Calu3 (cell line): ENCODE measurements at regions of chr20 and their contacts with region 1.

Region 1: DNA sequence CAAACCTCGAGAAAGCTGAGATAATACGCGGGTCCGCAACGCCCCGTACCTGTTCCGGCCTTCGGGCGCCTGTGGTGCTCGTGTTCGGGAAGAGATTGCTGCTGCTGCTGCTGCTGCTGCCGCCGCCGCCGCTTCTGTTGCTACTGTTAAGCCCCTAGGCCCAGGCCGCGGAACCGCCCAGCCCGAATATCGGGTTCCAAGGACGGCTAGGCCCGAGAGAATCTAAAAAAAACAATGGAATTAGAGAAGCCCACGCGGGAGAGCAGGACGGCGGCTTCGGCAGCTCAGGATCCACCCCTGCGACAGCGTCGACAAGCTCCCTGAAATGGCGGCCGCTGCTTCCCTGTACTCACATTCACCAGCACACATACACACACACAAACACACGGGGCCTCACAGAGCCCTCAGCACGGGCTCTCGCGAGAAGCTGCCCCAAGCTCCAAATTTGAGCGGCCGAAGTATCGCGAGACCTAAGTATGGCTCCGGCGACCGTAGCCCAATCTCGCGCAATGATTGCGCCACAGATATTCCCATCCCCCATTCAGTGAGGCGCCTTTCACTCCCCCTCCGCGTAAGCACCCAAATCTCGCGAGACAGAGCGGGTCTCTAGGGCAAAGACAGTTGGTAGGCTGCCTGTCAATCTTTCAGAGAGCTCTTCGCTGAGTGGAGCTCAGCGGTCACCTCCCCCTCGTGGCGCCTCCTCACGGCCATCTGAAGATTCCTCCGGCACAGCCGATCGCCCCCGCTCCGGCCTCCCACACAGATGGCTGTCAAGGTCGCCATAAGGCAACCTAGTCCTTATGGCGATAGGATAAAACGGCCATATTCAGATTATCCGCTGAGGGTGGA is at the start of gene RBM39:
- DNase-seq: peak; percentile 100
- H3K4me3 Mint-ChIP-seq: peak within 1 kb of the TSS; percentile 80
- H3K27ac Mint-ChIP-seq: peak within 1 kb of the TSS; percentile 100
- H3K4me1 Mint-ChIP-seq: peaks cover 35% of the 10 kb centered on the region
- H3K27me3 Mint-ChIP-seq: no peaks in the 10 kb centered on the region
- CTCF ChIP-seq: peak; percentile 52
- total RNA-seq, gene RBM39: 422 and 479 TPM in 2 replicates

Region 2: DNA sequence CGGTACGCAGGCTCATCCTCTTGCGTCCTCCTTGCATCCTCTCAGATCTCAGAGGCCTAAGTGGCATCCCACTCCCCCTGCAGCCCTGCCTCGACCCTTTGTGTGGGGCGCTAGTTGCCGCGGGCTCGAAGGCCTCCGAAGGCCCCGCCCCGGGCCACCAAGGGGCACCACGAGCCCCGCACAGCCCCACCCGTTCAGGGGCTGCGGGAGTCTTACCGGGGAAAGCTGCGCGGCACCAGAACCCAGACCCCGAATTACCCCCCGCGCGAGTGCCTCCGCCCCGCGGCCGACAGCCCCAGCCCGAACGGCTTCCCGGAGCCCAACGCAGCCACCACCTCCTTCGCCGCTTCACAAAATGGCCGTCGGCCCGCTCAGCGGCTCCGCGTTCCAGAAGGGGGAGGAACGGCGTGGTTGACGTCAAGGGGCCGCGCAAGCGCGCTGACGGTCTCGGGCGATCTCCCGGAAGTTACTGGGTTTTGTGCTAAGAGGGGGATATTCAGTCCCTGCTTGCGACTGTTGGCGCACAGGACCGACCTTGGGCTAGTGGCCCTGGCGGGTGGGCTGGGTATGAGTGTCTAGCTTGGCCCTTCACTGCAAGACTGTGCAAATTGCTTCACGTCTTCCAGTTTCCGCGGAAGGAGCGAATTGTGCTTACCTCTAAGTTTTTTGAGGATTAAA is 77.4 kb before region 1 on chr20 and contains the starts of genes CPNE1 and RBM12:
- CTCF ChIA-PET with region 1: no interaction called
- intact Hi-C with region 1: loop called (anchors 2 kb)
- DNase-seq: peak; percentile 97
- H3K4me3 Mint-ChIP-seq: peak within 1 kb of the TSS; percentile 98
- H3K27ac Mint-ChIP-seq: peak within 1 kb of the TSS; percentile 99
- H3K4me1 Mint-ChIP-seq: peaks cover 43% of the 10 kb centered on the region
- H3K27me3 Mint-ChIP-seq: no peaks in the 10 kb centered on the region
- CTCF ChIP-seq: no peak
- total RNA-seq, gene CPNE1: 458 and 505 TPM in 2 replicates
- total RNA-seq, gene RBM12: 125 and 133 TPM in 2 replicates

Region 3: DNA sequence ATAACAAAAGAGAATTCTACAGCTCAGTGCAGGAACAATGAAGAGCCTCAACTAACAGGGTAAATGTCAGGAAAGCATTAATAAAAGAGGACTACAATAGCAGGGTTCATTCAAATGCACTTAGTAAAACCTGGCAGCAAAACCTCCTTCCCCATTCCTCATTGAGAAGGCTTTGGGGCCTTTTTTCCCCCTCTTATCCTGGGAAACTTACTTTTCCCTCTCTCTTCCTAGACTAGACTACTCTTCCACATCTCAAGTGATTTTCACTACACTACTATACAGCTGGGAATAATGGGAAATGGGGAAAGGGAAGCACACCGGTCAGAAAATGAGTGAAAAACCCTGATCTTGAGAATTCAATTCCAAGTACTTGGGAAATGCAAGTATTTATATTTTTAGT is 32.9 kb before region 1 on chr20:
- CTCF ChIA-PET with region 1: no interaction called
- intact Hi-C with region 1: loop called (anchors 2 kb)
- DNase-seq: no peak
- H3K4me3 Mint-ChIP-seq: no peak overlapping the region
- H3K27ac Mint-ChIP-seq: peak overlapping the region; percentile 40
- H3K4me1 Mint-ChIP-seq: peaks cover 11% of the 10 kb centered on the region
- H3K27me3 Mint-ChIP-seq: no peaks in the 10 kb centered on the region
- CTCF ChIP-seq: no peak

Region 4: GRCh38 chr20:35768731-35769664 is 26.9 kb after region 1 on chr20:
- CTCF ChIA-PET with region 1: interaction called, 11 read pairs
- intact Hi-C with region 1: loop called (anchors 2 kb)
- DNase-seq: peak; percentile 84
- H3K4me3 Mint-ChIP-seq: no peak overlapping the region
- H3K27ac Mint-ChIP-seq: peak overlapping the region; percentile 24
- H3K4me1 Mint-ChIP-seq: peaks cover 36% of the 10 kb centered on the region
- H3K27me3 Mint-ChIP-seq: no peaks in the 10 kb centered on the region
- CTCF ChIP-seq: no peak

Region 5: DNA sequence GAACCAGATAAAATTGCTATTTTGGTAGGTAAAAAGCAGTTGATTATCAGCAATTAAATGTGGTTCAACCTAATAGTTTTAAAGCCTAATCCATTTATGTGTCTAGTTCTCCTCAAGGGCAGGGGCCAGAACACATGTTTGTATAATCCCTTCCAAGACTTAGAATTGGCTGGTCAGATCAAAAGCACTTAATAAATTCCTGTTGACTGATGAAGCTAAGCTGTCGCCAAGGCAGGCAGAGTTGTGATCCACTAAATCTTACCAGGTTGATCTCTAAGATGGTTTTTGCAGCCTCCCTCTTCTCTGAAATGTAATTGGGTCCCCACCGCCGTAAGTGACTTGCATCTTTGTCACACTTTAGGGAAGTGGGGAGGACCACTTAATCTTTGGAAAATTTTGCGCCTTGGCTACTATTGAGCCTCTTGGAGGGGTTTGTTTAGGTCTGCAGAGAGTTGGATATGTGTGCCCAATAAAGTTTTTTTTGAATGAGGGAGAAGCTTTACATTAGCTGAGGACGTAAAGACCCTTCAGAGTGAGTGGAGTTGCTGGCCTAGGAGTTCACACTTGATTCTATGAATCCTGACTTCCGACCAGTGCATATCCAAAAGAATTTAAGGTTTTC is 95.6 kb after region 1 on chr20:
- CTCF ChIA-PET with region 1: no interaction called
- intact Hi-C with region 1: no loop called
- DNase-seq: no peak
- H3K4me3 Mint-ChIP-seq: no peak overlapping the region
- H3K27ac Mint-ChIP-seq: no peak overlapping the region
- H3K4me1 Mint-ChIP-seq: no peaks in the 10 kb centered on the region
- H3K27me3 Mint-ChIP-seq: no peaks in the 10 kb centered on the region
- CTCF ChIP-seq: no peak

Region 6: DNA sequence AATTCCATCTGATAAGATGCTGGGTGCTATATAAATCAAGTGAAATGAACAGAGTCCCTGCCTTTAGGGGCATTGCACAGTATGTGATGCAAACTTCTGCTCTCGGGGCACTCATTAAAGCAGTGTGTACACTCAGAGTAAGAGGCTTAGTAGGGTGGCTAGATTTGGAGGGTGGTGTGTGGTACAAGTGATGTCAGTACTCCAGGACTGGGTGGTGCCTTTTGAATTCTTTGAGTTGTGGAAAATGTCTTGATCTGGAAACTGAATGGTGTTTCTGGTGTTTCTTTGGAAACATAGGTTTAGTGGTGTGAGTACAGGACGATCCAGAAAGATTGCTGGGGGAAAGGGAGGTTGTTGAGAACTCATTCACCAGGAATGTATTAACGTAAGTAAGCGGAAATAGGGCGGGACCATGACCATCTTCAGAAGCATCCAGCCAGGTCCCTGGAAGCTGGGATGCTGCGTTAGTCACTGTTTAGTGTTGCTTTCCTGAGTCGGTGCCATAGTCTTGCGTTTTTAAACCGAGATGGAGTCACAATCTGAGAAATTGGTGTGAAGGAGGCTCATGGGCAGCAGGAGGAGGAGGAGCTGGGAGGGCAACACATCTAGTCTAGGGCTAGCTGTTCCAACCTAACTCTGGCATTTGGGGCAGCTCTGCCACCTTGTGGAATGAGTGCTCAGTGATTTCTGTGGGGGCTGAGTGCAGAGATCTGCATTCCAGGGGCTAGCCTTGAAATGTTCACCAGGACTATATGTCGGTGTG is 141.8 kb after region 1 on chr20:
- CTCF ChIA-PET with region 1: interaction called, 8 read pairs
- intact Hi-C with region 1: loop called (anchors 2 kb)
- DNase-seq: peak; percentile 79
- H3K4me3 Mint-ChIP-seq: peak overlapping the region; percentile 33
- H3K27ac Mint-ChIP-seq: peak overlapping the region; percentile 53
- H3K4me1 Mint-ChIP-seq: peaks cover 12% of the 10 kb centered on the region
- H3K27me3 Mint-ChIP-seq: no peaks in the 10 kb centered on the region
- CTCF ChIP-seq: peak; percentile 76

Region 7: DNA sequence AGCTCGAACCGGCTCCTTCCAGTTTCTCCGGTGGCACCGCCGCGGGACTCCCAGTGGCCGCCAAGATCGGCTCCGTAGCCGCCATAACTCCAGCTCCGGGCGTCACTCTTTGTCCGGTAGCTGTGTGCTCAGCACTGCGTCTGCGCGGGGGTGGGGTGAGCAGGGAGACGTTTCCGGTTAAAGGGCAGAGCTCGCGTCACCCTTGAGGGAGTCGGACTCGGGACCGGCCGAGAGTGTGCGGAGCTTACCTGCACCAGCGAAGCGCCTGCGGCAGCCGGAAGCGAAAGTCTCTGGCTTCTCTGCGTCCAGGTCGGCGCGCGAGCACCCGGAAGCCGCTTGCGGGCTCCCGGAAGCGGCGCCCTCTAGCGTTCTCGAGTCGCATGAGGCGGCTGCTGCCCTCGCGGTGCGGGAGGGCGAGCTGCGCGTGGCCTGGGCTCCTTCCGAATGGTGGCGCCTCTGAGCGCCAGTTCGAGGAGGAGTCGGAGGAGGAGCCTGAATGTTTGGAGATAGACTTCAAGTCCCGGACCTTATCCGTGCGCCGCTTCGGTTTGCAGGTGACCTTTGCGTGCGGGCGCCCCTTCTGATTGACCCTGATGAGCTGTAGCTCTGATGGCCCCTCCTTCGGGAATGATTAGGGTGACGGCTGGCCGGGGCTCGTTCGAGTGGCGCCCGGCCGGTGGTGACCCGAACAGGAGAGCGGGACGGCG is 212.2 kb after region 1 on chr20 and contains the start of gene SCAND1:
- CTCF ChIA-PET with region 1: interaction called, 13 read pairs
- intact Hi-C with region 1: no loop called
- DNase-seq: peak; percentile 99
- H3K4me3 Mint-ChIP-seq: peak within 1 kb of the TSS; percentile 99
- H3K27ac Mint-ChIP-seq: peak within 1 kb of the TSS; percentile 88
- H3K4me1 Mint-ChIP-seq: peaks cover 13% of the 10 kb centered on the region
- H3K27me3 Mint-ChIP-seq: no peaks in the 10 kb centered on the region
- CTCF ChIP-seq: peak; percentile 96
- total RNA-seq, gene SCAND1: 83.5 and 88.6 TPM in 2 replicates